ENCODE measurements at regions of chr15 and their contacts with region 1.

Region 1: DNA sequence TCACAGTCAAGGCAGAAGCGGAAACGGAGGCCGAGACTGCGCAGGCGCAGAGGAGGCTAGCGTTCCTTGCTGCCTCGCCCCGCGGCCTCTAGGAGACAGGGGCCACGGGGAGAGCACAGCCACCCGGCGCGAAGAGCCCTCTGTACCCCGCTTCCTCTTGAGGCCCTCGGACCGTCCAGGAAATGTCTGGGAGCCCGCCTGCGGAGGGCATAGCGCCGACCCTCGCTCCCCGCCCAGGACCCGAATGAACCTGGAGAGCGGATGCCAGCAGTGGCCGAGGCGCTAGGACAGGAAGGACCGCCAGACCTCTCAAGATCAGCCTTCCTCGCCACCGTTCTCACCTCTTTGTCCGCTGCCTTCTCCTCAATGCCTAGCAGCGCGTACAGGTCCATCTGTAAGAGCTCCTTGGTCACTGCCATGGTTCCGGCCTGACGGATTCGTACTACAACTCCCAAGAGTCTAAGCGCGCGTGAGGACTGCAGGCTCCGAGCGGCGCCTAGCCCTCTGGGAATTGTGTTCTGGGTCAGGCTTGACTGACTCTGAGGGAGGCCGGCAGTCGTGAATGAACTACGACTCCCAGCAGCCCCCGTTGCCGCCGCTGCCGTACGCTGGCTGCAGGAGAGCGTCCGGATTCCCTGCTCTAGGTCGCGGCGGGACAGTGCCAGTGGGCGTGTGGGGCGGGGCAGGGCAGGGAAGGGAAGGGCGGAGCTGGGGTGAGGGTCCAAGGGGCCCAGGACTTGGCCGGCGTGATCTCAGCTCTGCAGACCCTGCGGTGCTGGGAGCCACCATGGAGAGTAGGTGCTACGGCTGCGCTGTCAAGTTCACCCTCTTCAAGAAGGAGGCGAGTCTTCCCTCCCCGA is at the starts of genes DNAJC17 and ZFYVE19:
- DNase-seq: peak; percentile 98
- H3K4me3 Mint-ChIP-seq: peak within 1 kb of the TSS; percentile 93
- H3K27ac Mint-ChIP-seq: peak within 1 kb of the TSS; percentile 96
- H3K4me1 Mint-ChIP-seq: peaks cover 13% of the 10 kb centered on the region
- H3K27me3 Mint-ChIP-seq: no peaks in the 10 kb centered on the region
- total RNA-seq, gene DNAJC17: 53.8 and 54.3 TPM in 2 replicates
- total RNA-seq, gene ZFYVE19: 35.6 and 37.6 TPM in 2 replicates

Region 2: DNA sequence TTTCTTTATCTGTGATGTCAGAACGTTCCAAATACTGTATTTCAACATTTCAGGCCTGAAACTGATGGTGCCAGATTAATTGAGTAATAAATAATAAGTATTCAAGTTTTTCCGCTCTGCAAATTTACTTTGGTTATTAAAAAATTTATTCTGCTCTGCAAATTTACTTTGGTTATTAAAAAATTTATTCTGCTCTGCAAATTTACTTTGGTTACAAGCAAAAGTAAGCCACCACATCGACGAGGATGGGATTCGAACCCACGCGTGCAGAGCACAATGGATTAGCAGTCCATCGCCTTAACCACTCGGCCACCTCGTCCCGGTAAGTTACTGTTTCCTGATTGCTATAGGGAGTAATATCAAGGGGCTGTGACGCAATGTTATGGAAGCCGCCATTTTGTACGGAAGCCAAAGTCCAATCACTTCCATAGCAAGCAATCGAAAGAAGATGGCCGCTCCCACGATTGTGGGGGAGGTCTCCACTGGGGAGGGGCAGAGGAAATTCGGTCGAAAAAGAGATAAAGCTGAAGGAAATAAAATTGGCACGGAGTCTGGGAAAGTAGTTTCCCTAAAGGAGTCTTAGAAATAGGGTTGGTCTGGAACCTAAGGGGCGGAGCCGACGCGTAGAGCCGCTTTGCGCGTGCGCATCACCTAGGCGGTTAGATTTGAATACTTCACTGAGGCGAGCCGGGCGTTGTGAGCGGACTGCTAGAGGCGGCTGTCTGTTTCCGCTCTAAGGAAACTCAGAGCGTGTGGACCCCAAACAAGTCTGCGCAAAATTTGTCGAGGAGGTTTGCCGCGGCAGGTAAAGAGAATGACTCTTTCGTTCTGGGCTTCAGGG is 213.4 kb before region 1 on chr15 and contains the start of gene KNL1:
- intact Hi-C with region 1: loop called (anchors 1 kb)
- DNase-seq: peak; percentile 98
- H3K4me3 Mint-ChIP-seq: peak within 1 kb of the TSS; percentile 88
- H3K27ac Mint-ChIP-seq: peak within 1 kb of the TSS; percentile 95
- H3K4me1 Mint-ChIP-seq: peaks cover 36% of the 10 kb centered on the region
- H3K27me3 Mint-ChIP-seq: no peaks in the 10 kb centered on the region
- total RNA-seq, gene KNL1: 25.3 and 25.6 TPM in 2 replicates

Region 3: DNA sequence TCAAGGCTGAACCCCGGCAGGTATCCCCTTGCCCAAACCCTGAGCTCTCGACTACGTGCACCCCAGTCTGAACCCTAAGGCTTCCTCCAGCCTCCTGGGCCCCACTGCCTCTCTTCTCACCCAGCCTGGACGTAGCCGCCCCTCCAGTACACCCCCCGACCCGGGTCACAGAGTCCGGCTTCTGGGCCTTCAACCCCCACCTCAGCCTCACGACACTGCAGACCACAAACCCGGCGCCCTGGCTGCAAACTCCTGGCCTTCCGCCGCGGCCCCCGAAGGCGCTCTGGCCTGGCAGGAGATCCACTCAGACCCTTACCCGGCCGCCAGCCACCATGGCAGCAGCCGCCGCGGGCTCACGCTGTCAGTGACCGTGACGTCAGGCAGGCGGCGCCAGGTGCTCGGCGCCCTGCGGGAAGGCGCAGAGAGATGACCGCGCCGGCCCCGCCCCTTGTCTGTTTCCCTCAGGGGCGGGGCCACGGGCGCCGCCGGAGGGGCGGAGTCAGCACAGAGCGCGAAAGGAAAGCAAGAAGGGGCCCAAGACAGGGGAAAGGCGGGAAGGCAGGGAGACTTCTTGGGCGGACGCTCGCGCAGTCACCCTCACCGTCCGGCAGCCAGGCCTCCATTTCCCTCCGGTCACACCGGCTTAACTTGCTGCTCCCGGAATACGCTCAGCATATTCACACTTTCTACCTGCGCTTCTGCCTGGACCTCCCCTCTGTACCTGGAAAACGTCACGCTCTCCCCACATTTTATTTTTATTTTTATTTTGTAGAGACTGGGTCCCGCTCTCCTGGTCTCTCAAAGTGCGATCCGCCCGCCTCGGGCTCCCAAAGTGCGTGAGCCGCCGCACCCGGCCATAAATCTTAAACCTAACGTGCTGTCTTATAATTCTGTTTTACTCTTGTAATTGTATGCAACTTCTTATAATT is 52.1 kb before region 1 on chr15 and contains the start of gene RMDN3:
- intact Hi-C with region 1: loop called (anchors 1 kb)
- DNase-seq: peak; percentile 99
- H3K4me3 Mint-ChIP-seq: peak within 1 kb of the TSS; percentile 98
- H3K27ac Mint-ChIP-seq: peak within 1 kb of the TSS; percentile 98
- H3K4me1 Mint-ChIP-seq: peaks cover 38% of the 10 kb centered on the region
- H3K27me3 Mint-ChIP-seq: no peaks in the 10 kb centered on the region
- total RNA-seq, gene RMDN3: 36.1 and 38.9 TPM in 2 replicates

Region 4: DNA sequence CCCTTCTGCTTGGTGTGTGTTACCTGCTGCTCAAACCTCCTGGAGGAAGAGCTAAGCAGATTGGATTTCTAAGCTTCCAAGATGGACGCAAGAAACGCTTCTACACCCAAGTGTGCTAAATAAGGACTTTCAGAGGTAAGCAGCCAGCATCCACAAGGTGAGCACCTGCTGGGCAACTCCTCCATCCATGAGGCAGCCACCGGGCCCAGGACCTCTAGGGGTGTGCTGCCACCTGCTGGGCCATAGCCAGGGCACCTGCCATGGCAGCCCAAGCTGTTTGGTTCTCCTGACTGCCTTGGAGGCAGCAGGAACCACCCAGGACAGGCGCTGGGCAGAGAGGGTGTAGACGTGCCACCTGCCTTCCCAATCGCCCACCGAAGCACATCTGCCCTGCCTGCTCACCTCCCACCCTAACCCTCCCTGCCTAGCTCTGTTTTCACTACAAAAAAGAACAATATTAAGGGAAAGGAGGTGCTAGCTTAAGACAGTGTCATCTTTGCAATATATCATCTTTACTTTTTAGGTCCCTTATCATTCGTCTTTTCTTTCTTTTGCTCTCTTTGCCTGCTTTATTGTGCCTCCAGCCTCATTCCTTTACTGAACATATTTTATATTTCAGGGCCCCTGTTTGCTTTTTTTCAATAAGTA is 24.6 kb before region 1 on chr15:
- intact Hi-C with region 1: loop called (anchors 2 kb)
- DNase-seq: peak; percentile 94
- H3K4me3 Mint-ChIP-seq: no peak overlapping the region
- H3K27ac Mint-ChIP-seq: no peak overlapping the region
- H3K4me1 Mint-ChIP-seq: peaks cover 19% of the 10 kb centered on the region
- H3K27me3 Mint-ChIP-seq: no peaks in the 10 kb centered on the region

Region 5: GRCh38 chr15:41161336-41161735 is 354.1 kb after region 1 on chr15:
- intact Hi-C with region 1: no loop called
- DNase-seq: no peak
- H3K4me3 Mint-ChIP-seq: no peak overlapping the region
- H3K27ac Mint-ChIP-seq: no peak overlapping the region
- H3K4me1 Mint-ChIP-seq: peaks cover 14% of the 10 kb centered on the region
- H3K27me3 Mint-ChIP-seq: peaks cover 14% of the 10 kb centered on the region

Measured in activated CD4-positive, alpha-beta T cell treated with anti-CD3 and anti-CD28 coated beads, Interleukin-2, amount 10 ng/mL, durations not matched to agents 24 days and 14 days (primary cell).